ENCODE measurements at regions of chr2 and their contacts with region 1.

Region 1: GRCh38 chr2:156589381-156590079 is 153.4 kb downstream of the GPD2 start:
- DNase-seq: peak; percentile 30
- ATAC-seq: no peak
- H3K4me3 Mint-ChIP-seq: no peak overlapping the region
- H3K27ac Mint-ChIP-seq: no peak overlapping the region
- H3K4me1 Mint-ChIP-seq: peaks cover 5% of the 10 kb centered on the region
- H3K27me3 Mint-ChIP-seq: no peaks in the 10 kb centered on the region

Region 2: DNA sequence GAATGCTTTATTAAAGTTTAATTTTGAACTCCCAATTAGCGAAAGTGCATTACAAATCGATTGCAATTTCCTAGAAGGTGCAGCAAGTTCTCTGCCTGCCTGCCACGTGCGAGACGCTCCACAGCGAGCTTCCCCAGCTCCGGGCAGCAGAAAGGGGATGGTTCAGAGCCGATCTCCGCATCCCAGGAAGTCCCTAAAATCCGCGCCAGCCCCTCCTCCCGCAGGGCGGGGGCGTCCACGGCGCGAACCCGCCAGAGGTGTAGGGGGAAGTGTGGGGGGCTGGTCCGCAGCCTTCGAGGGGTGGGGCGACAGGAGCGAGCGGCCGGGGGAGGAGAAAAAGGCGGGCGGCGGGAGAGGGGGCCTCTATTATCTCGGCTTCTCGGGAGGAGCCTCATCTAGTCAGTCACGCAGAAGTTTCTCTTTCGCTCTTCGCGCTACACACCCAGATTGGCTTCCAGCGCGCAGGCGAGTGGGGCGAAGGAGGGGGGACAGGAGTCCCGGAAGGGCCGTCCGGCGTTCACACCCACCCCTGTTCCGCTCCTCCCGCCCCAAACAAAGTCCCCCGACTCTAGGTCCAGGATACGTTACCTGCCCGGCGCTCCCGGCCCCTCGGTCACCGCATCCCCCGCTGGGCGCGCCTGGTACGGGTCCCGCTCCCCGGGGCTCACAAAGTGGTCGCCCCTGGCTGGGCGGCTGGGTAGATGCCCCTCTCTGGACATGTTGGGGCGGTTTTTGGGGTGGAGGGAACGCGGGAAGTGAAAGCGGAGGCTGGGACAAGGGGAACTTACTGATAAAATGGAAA is 247.9 kb before region 1 on chr2:
- CTCF ChIA-PET with region 1: interaction called, 11 read pairs
- POLR2A ChIA-PET with region 1: interaction called, 3 read pairs
- DNase-seq: peak; percentile 93
- ATAC-seq: peak; percentile 81
- H3K4me3 Mint-ChIP-seq: peak overlapping the region; percentile 96
- H3K27ac Mint-ChIP-seq: peak overlapping the region; percentile 97
- H3K4me1 Mint-ChIP-seq: peaks cover 44% of the 10 kb centered on the region
- H3K27me3 Mint-ChIP-seq: no peaks in the 10 kb centered on the region

Region 3: GRCh38 chr2:156464106-156464505 is 125.4 kb before region 1 on chr2:
- CTCF ChIA-PET with region 1: no interaction called
- POLR2A ChIA-PET with region 1: no interaction called
- DNase-seq: no peak
- ATAC-seq: no peak
- H3K4me3 Mint-ChIP-seq: no peak overlapping the region
- H3K27ac Mint-ChIP-seq: no peak overlapping the region
- H3K4me1 Mint-ChIP-seq: no peaks in the 10 kb centered on the region
- H3K27me3 Mint-ChIP-seq: no peaks in the 10 kb centered on the region

Region 4: DNA sequence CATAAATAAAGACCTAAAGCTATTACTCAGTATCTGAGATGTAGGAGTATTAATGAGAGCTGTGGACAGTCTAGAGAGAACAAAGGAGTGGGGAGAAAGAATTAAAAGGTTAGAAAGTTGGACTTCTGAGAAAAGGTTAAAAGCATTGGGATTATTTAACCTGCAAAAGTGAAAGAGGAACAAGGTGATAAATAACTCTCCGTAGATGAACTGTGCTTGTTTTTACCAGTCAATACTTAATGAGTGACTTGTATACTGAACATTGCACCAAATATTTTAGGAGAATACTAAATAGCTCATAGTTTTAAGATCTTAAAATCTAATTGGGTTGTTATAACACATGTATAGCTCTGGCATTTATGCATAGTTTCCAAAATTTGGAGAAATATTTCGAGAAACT is 15.8 kb before region 1 on chr2:
- CTCF ChIA-PET with region 1: interaction called, 12 read pairs
- POLR2A ChIA-PET with region 1: no interaction called
- DNase-seq: no peak
- ATAC-seq: no peak
- H3K4me3 Mint-ChIP-seq: no peak overlapping the region
- H3K27ac Mint-ChIP-seq: no peak overlapping the region
- H3K4me1 Mint-ChIP-seq: peaks cover 14% of the 10 kb centered on the region
- H3K27me3 Mint-ChIP-seq: no peaks in the 10 kb centered on the region

Measured in activated CD8-positive, alpha-beta T cell treated with anti-CD3 and anti-CD28 coated beads, Interleukin-2, amount 10 ng/mL, durations not matched to agents 7 days and 5 days (primary cell).